H1 (cell line): ENCODE measurements at regions of chr15 and their contacts with region 1.

Region 1: GRCh38 chr15:40525855-40526254 is 39.0 kb downstream of the CCDC32 start:
- DNase-seq: no peak
- H3K4me3 ChIP-seq: no peak overlapping the region
- H3K27ac ChIP-seq: no peak overlapping the region
- H3K4me1 ChIP-seq: no peaks in the 10 kb centered on the region
- H3K27me3 ChIP-seq: no peaks in the 10 kb centered on the region
- CTCF ChIP-seq: no peak
- EP300 ChIP-seq: no peak
- POLR2A ChIP-seq: no peak
- RAD21 ChIP-seq: no peak

Region 2: DNA sequence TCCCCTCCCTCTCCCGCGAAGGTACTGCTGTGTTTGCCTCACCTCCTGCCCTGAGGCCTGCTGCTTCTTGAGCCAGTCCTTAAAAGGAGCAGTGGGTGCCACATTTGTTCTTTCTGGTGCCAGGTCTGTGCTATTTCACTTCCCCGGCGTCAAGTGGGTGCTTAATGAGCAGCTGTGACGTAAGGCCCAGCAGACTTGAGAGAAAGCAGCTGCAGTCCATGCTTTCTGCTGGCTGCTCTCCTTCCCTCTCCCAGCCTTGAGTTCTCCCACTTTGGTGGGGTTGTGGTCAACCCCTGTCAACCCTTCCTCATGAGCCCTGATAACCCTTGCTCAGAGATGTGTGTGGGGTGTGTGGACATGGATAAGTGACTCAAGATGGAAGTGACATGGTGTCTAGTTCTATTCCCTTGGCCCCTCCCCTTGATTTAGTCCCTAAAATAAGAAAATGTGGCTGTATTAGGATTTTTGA is 195.5 kb before region 1 on chr15:
- CTCF ChIA-PET with region 1: no interaction called
- POLR2A ChIA-PET with region 1: no interaction called
- DNase-seq: no peak
- H3K4me3 ChIP-seq: no peak overlapping the region
- H3K27ac ChIP-seq: no peak overlapping the region
- H3K4me1 ChIP-seq: peaks cover 24 to 42% (median 32%) of the 10 kb centered on the region in 4 experiments
- H3K27me3 ChIP-seq: peaks cover 0 to 1% (median 0%) of the 10 kb centered on the region in 4 experiments; a peak in 1 of 7 replicates
- CTCF ChIP-seq: no peak
- EP300 ChIP-seq: no peak
- POLR2A ChIP-seq: no peak
- RAD21 ChIP-seq: no peak

Region 3: DNA sequence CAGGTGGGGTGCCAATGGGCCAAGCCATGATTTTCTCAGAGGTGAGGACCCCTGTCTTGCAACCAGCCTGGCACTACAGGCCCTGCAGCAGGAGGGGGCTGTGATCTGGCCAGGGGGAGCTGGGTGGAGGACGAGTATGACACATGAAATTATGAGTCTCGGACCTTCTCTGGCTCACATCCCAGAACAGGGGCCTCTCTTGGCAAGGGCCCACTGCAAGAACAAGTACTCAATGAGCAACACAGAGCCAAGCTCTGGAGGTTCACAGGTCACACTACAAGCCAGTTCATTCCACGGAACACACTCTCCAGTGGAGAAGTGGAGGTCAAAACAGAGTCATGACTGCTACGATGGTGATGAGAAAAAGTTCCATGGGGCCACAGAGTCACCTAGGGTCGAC is 10.6 kb after region 1 on chr15:
- CTCF ChIA-PET with region 1: interaction called, 15 read pairs
- POLR2A ChIA-PET with region 1: no interaction called
- DNase-seq: no peak
- H3K4me3 ChIP-seq: no peak overlapping the region
- H3K27ac ChIP-seq: no peak overlapping the region
- H3K4me1 ChIP-seq: no peaks in the 10 kb centered on the region
- H3K27me3 ChIP-seq: no peaks in the 10 kb centered on the region
- CTCF ChIP-seq: no peak
- EP300 ChIP-seq: no peak
- POLR2A ChIP-seq: no peak
- RAD21 ChIP-seq: no peak